ENCODE measurements at regions of chr4 and their contacts with region 1.

Region 1: GRCh38 chr4:54971474-54971950 is 153.9 kb downstream of the KDR start:
- DNase-seq: no peak
- H3K4me3 ChIP-seq: no peak overlapping the region
- H3K27me3 ChIP-seq: peaks cover 2% of the 10 kb centered on the region; the same call in 1 of the 2 replicates
- CTCF ChIP-seq: peak; percentile 61

Region 2: GRCh38 chr4:54322818-54323417 is 648.6 kb before region 1 on chr4:
- CTCF ChIA-PET with region 1: interaction called, 12 read pairs
- POLR2A ChIA-PET with region 1: no interaction called
- DNase-seq: no peak
- H3K4me3 ChIP-seq: no peak overlapping the region
- H3K27me3 ChIP-seq: no peaks in the 10 kb centered on the region; the same call in 1 of the 2 replicates
- CTCF ChIP-seq: peak; percentile 78

Region 3: DNA sequence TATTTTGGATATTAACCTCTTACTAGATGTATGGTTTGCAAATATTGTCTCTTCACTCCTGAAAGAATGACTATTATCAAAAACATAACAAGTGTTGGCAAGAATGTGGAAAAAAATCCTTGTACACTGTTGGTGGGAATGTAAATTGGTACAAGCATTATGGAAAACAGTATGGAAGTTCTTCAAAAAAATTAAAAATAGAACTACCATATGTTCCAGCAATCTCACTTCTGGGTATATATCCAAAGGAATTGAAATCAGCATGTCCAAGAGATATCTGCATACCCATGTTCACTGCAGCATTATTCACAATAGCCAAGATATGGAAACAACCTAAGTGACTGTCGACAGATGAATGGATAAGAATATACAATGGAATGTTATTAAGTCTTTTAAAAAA is 375.3 kb before region 1 on chr4:
- CTCF ChIA-PET with region 1: no interaction called
- POLR2A ChIA-PET with region 1: no interaction called
- DNase-seq: no peak
- H3K4me3 ChIP-seq: no peak overlapping the region
- H3K27me3 ChIP-seq: no peaks in the 10 kb centered on the region
- CTCF ChIP-seq: no peak

Region 4: GRCh38 chr4:54961357-54961975 is 10.0 kb before region 1 on chr4:
- CTCF ChIA-PET with region 1: interaction called, 37 read pairs
- POLR2A ChIA-PET with region 1: no interaction called
- DNase-seq: no peak
- H3K4me3 ChIP-seq: no peak overlapping the region
- H3K27me3 ChIP-seq: no peaks in the 10 kb centered on the region; the same call in none of the 2 replicates
- CTCF ChIP-seq: peak; percentile 68

Region 5: GRCh38 chr4:54986095-54986846 is 14.8 kb after region 1 on chr4:
- CTCF ChIA-PET with region 1: interaction called, 11 read pairs
- POLR2A ChIA-PET with region 1: no interaction called
- DNase-seq: no peak
- H3K4me3 ChIP-seq: no peak overlapping the region
- H3K27me3 ChIP-seq: no peaks in the 10 kb centered on the region; the same call in 1 of the 2 replicates
- CTCF ChIP-seq: no peak

Region 6: DNA sequence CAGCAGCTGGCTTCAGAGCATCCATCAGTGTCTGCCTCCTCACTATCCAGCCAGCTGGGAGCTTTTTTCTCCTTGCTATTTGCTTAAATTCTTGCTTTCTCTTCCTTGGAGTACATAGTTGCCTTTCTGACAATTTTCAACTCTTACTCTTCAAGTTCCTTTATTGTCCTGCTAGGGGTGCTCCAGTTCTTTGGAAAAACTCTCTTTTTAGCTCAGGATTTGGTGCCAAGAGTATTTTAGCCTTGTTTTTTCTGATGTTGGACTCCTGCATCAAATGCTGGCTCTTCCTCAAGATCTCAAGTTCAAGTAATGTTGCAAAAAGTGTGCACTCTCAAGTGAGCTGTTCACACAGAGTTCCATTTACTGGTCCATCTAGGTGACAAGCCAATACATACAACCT is 27.5 kb after region 1 on chr4:
- CTCF ChIA-PET with region 1: no interaction called
- POLR2A ChIA-PET with region 1: no interaction called
- DNase-seq: no peak
- H3K4me3 ChIP-seq: no peak overlapping the region
- H3K27me3 ChIP-seq: peaks cover 1% of the 10 kb centered on the region; the same call in 1 of the 2 replicates
- CTCF ChIP-seq: 0 out of 2 replicates have a peak, but pooled peaks have one; percentile 10

Region 7: DNA sequence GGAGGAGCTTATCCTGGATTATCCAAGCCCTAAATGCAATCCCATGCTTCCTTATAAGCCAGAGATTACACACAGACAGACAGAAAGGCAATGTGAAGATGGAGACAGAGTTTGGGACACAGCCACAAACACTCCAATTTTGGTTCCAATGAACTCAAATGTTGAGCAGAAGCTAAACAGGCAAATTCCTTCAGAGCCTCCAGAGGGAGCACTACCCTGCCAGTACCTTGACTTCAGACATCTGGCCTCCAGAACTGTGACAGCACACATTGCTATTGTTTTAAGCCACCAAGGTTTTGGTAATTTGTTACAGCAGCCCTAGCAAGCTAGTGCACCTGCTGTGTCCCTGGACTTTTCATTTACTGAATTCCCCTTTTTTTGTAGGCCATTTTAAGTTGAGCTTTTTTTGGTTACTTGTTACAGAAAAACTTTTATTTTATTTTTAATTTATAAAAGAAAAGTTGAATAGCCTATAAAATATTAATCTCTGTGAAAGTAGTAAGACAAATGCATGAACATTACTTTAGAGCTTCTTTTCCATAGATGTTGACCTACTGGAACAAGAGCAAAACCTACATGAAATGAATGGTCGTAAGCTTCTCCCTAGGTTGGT is 341.1 kb after region 1 on chr4:
- CTCF ChIA-PET with region 1: interaction called, 106 read pairs
- POLR2A ChIA-PET with region 1: no interaction called
- DNase-seq: peak; percentile 9
- H3K4me3 ChIP-seq: no peak overlapping the region
- H3K27me3 ChIP-seq: peaks cover 1% of the 10 kb centered on the region; the same call in 1 of the 2 replicates
- CTCF ChIP-seq: peak; percentile 87

Region 8: GRCh38 chr4:55321707-55322264 is 350.3 kb after region 1 on chr4:
- CTCF ChIA-PET with region 1: interaction called, 106 read pairs
- POLR2A ChIA-PET with region 1: no interaction called
- DNase-seq: no peak
- H3K4me3 ChIP-seq: no peak overlapping the region
- H3K27me3 ChIP-seq: peaks cover 9% of the 10 kb centered on the region; the same call in 1 of the 2 replicates
- CTCF ChIP-seq: peak; percentile 56

Measured in BJ (cell line).